CD4-positive, alpha-beta T cell (primary cell): ENCODE measurements at regions of chr22 and their contacts with region 1.

Region 1: DNA sequence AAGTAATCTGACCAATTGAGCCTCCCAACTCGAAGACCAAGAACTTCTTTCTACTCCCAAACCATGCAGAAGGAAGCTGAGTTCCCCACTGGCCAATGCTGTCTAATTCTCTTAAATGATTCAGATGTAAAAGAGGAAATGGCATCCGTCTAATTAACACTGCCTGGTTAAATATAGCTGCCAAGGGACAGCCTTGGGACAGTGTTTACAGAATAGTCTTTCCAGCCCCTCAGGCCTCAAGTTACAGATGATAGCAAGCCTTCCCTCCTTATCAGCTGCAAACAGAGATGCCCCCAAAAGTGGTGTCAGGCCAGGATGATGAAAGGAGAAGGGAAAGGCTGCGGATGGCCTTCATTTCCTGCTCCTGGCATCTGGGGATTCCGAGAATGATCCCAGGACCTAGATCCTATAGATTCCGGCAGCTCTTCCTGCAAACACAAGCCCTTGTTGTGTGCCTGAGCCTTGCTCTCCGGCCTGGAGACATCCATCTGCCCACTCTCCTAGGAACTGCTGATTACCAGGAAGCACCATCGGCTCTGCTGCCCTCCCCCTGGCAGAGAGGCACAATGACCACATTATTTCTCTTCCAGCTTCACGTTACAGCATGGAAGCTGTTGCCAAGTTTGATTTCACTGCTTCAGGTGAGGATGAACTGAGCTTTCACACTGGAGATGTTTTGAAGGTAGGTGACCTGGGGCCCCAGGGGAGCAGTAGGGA is 13.5 kb upstream of the TMA7B start:
- DNase-seq: no peak
- ATAC-seq: no peak
- H3K4me3 ChIP-seq: no peak overlapping the region
- H3K4me3 Mint-ChIP-seq: peak overlapping the region; percentile 69
- H3K27ac ChIP-seq: peak overlapping the region; percentile 26 to 37
- H3K27ac Mint-ChIP-seq: no peak overlapping the region
- H3K4me1 ChIP-seq: peaks cover 94% of the 10 kb centered on the region
- H3K4me1 Mint-ChIP-seq: peaks cover 99% of the 10 kb centered on the region
- H3K27me3 ChIP-seq: no peaks in the 10 kb centered on the region
- H3K27me3 Mint-ChIP-seq: no peaks in the 10 kb centered on the region
- CTCF ChIP-seq: no peak

Region 2: GRCh38 chr22:39559454-39560105 is 387.1 kb before region 1 on chr22:
- CTCF ChIA-PET with region 1: no interaction called
- POLR2A ChIA-PET with region 1: no interaction called
- intact Hi-C with region 1: loop called (anchors 2 to 5 kb)
- DNase-seq: peak in 1 of 14 experiments; percentile 24
- ATAC-seq: no peak
- H3K4me3 ChIP-seq: no peak overlapping the region
- H3K4me3 Mint-ChIP-seq: no peak overlapping the region
- H3K27ac ChIP-seq: no peak overlapping the region
- H3K27ac Mint-ChIP-seq: no peak overlapping the region
- H3K4me1 ChIP-seq: peaks cover 15% of the 10 kb centered on the region
- H3K4me1 Mint-ChIP-seq: no peaks in the 10 kb centered on the region
- H3K27me3 ChIP-seq: peaks cover 29 to 38% of the 10 kb centered on the region in 2 experiments
- H3K27me3 Mint-ChIP-seq: peaks cover 19% of the 10 kb centered on the region
- CTCF ChIP-seq: no peak

Region 3: GRCh38 chr22:39684702-39685281 is 261.9 kb before region 1 on chr22:
- CTCF ChIA-PET with region 1: no interaction called
- POLR2A ChIA-PET with region 1: no interaction called
- intact Hi-C with region 1: loop called in 1 of 2 experiments (anchors 5 kb)
- DNase-seq: no peak
- ATAC-seq: no peak
- H3K4me3 ChIP-seq: no peak overlapping the region
- H3K4me3 Mint-ChIP-seq: no peak overlapping the region
- H3K27ac ChIP-seq: no peak overlapping the region
- H3K27ac Mint-ChIP-seq: no peak overlapping the region
- H3K4me1 ChIP-seq: no peaks in the 10 kb centered on the region
- H3K4me1 Mint-ChIP-seq: peaks cover 15% of the 10 kb centered on the region
- H3K27me3 ChIP-seq: peaks cover 0 to 2% of the 10 kb centered on the region in 2 experiments
- H3K27me3 Mint-ChIP-seq: peaks cover 32% of the 10 kb centered on the region
- CTCF ChIP-seq: no peak

Region 4: DNA sequence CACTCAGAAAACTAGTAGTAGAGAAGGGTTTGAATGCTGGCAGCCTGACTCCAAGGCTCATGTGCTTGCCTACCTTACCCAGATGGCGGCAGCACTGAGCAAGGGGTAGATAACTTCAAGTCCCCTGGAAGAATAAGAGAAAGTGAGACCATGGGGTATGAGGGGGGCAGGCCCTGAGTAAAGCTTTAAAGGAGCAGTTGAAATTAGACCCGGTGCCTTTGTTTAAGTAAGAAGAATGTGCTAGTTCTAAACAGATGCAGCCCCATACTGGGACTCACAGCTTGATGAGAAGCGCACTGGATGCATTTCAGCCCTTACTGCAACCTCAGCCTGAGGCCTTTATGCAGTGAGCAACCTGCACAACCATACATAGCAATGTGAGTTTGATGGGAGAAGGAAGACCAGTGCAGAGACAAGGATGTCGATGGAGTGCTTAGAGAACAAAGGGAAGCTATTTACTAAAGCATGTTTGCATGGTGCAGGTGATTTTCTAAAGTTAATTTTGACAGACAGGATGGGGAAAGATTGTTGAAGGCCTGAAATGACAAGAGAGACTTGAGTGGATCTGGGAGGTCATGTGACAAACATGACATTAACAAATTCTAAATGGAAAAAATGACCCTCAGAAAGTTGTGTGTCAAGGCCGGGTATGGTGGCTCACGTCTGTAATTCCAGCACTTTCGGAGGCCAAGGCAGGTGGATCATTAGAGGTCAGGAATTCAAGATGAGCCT is 13.6 kb before region 1 on chr22:
- CTCF ChIA-PET with region 1: interaction called, 12 read pairs
- POLR2A ChIA-PET with region 1: interaction called, 13 read pairs
- intact Hi-C with region 1: no loop called
- DNase-seq: peak in 9 of 14 experiments; percentile 38 to 82 (median 57)
- ATAC-seq: peak; percentile 37
- H3K4me3 ChIP-seq: peak overlapping the region; percentile 9
- H3K4me3 Mint-ChIP-seq: peak overlapping the region; percentile 65
- H3K27ac ChIP-seq: peak overlapping the region in 1 of 2 donors; percentile 87
- H3K27ac Mint-ChIP-seq: no peak overlapping the region
- H3K4me1 ChIP-seq: peaks cover 93% of the 10 kb centered on the region
- H3K4me1 Mint-ChIP-seq: peaks cover 55% of the 10 kb centered on the region
- H3K27me3 ChIP-seq: no peaks in the 10 kb centered on the region
- H3K27me3 Mint-ChIP-seq: no peaks in the 10 kb centered on the region
- CTCF ChIP-seq: peak; percentile 66

Region 5: GRCh38 chr22:39994566-39995392 is 48.1 kb after region 1 on chr22 and contains the start of gene FAM83F:
- CTCF ChIA-PET with region 1: no interaction called
- POLR2A ChIA-PET with region 1: interaction called, 12 read pairs
- intact Hi-C with region 1: loop called in 1 of 2 experiments (anchors 5 kb)
- DNase-seq: peak in 10 of 14 experiments; percentile 6 to 68 (median 40)
- ATAC-seq: peak; percentile 18
- H3K4me3 ChIP-seq: peak within 1 kb of the TSS; percentile 29
- H3K4me3 Mint-ChIP-seq: peak within 1 kb of the TSS; percentile 81
- H3K27ac ChIP-seq: no peak within 1 kb of the TSS
- H3K27ac Mint-ChIP-seq: peak within 1 kb of the TSS; percentile 81
- H3K4me1 ChIP-seq: peaks cover 20% of the 10 kb centered on the region
- H3K4me1 Mint-ChIP-seq: peaks cover 18% of the 10 kb centered on the region
- H3K27me3 ChIP-seq: peaks cover 13 to 17% of the 10 kb centered on the region in 2 experiments
- H3K27me3 Mint-ChIP-seq: peaks cover 27% of the 10 kb centered on the region
- CTCF ChIP-seq: no peak
- total RNA-seq, gene FAM83F: 5.2 to 6.8 TPM

Region 6: DNA sequence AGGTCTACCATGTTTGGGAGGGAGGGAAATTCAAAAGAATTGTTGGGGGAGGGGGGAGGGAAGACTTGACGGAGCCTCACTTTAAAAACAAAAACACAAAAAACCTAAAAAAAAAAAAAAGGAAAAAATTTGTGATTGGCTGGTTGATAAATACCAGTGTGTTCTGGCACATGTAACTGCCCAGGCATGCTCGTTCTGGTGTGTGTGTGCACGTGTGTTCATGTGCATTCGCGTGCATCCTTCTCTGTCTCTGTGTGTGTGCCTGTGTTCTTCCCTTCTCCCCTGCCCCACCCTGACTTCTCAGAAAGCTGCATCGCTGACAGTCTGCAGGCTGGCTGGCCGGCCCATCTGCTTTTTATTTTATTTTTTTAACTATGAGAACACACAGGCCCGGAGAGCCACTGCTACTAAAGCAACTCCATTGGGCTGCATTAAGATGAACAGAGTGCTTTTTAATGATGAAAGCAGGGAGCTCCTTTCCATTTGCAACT is 377.1 kb after region 1 on chr22:
- CTCF ChIA-PET with region 1: no interaction called
- POLR2A ChIA-PET with region 1: no interaction called
- intact Hi-C with region 1: no loop called
- DNase-seq: peak in 9 of 14 experiments; percentile 22 to 82 (median 36)
- ATAC-seq: peak; percentile 15
- H3K4me3 ChIP-seq: peak overlapping the region; percentile 13
- H3K4me3 Mint-ChIP-seq: peak overlapping the region; percentile 88
- H3K27ac ChIP-seq: peak overlapping the region; percentile 71 to 74
- H3K27ac Mint-ChIP-seq: peak overlapping the region; percentile 97
- H3K4me1 ChIP-seq: peaks cover 49% of the 10 kb centered on the region
- H3K4me1 Mint-ChIP-seq: peaks cover 90% of the 10 kb centered on the region
- H3K27me3 ChIP-seq: no peaks in the 10 kb centered on the region
- H3K27me3 Mint-ChIP-seq: no peaks in the 10 kb centered on the region
- CTCF ChIP-seq: no peak